ENCODE measurements at regions of chr6 and their contacts with region 1.

Region 1: GRCh38 chr6:43758617-43759050 is 11.4 kb upstream of the VEGFA start:
- DNase-seq: peak; percentile 90
- ATAC-seq: peak; percentile 97
- H3K4me3 Mint-ChIP-seq: no peak overlapping the region
- H3K27ac Mint-ChIP-seq: no peak overlapping the region
- H3K4me1 Mint-ChIP-seq: peaks cover 21% of the 10 kb centered on the region
- H3K27me3 Mint-ChIP-seq: no peaks in the 10 kb centered on the region; the same call in 1 of the 2 replicates
- CTCF ChIP-seq: peak; percentile 63

Region 2: GRCh38 chr6:43347021-43347420 is 411.6 kb before region 1 on chr6:
- CTCF ChIA-PET with region 1: no interaction called
- POLR2A ChIA-PET with region 1: no interaction called
- DNase-seq: no peak
- ATAC-seq: no peak
- H3K4me3 Mint-ChIP-seq: no peak overlapping the region
- H3K27ac Mint-ChIP-seq: no peak overlapping the region
- H3K4me1 Mint-ChIP-seq: no peaks in the 10 kb centered on the region
- H3K27me3 Mint-ChIP-seq: no peaks in the 10 kb centered on the region
- CTCF ChIP-seq: no peak

Region 3: GRCh38 chr6:43723737-43724295 is 34.8 kb before region 1 on chr6:
- CTCF ChIA-PET with region 1: interaction called, 16 read pairs
- POLR2A ChIA-PET with region 1: interaction called, 3 read pairs
- DNase-seq: peak; percentile 80
- ATAC-seq: peak; percentile 93
- H3K4me3 Mint-ChIP-seq: no peak overlapping the region
- H3K27ac Mint-ChIP-seq: no peak overlapping the region
- H3K4me1 Mint-ChIP-seq: peaks cover 12% of the 10 kb centered on the region
- H3K27me3 Mint-ChIP-seq: no peaks in the 10 kb centered on the region; the same call in 1 of the 2 replicates
- CTCF ChIP-seq: peak; percentile 60

Region 4: DNA sequence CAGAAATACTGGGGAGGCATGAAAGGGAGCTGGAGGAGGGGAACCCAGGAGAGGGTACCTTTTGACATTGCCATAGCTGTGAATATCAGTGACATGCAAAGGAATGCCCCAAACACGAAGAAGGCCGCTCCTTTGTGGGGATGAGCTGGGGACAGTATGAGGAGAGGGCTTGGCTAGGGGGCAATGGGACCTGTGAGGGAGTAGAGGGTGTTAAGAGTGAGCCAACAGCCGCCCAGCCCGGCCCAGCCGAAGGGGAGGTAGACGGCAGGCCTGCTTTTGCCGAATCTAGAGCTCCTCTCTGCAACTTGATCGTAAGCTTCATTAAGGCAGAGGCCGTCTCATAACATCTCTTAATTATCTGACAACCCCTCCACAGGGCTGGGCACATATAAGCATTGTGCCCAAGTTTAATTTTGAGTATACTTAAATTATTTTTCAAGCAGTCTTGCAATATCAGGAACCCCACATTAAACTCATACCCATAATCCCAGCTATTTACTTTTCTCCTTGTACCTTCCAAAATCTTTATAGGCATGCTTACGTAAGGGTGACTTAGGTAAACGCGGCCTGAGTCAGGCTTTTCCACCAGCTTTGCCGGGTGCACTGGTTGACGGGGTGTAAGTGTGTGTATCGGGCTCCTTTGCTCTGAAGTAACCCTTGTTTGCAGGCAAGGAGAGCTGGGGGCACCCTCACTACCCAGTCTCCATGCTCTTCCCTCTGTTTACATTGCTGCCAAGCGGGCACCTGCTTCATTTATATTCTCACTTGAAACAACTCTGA is 13.5 kb before region 1 on chr6:
- CTCF ChIA-PET with region 1: interaction called, 11 read pairs
- POLR2A ChIA-PET with region 1: no interaction called
- DNase-seq: no peak
- ATAC-seq: no peak
- H3K4me3 Mint-ChIP-seq: no peak overlapping the region
- H3K27ac Mint-ChIP-seq: no peak overlapping the region; the same call in 1 of the 2 replicates
- H3K4me1 Mint-ChIP-seq: peaks cover 28% of the 10 kb centered on the region
- H3K27me3 Mint-ChIP-seq: peaks cover 3% of the 10 kb centered on the region
- CTCF ChIP-seq: no peak

Region 5: GRCh38 chr6:43774776-43775534 is 16.3 kb after region 1 on chr6:
- CTCF ChIA-PET with region 1: interaction called, 67 read pairs
- POLR2A ChIA-PET with region 1: interaction called, 18 read pairs
- DNase-seq: peak; percentile 85
- ATAC-seq: peak; percentile 46
- H3K4me3 Mint-ChIP-seq: peak overlapping the region; percentile 48
- H3K27ac Mint-ChIP-seq: peak overlapping the region; percentile 82
- H3K4me1 Mint-ChIP-seq: peaks cover 33% of the 10 kb centered on the region
- H3K27me3 Mint-ChIP-seq: peaks cover 2% of the 10 kb centered on the region; the same call in 1 of the 2 replicates
- CTCF ChIP-seq: peak; percentile 82

Region 6: DNA sequence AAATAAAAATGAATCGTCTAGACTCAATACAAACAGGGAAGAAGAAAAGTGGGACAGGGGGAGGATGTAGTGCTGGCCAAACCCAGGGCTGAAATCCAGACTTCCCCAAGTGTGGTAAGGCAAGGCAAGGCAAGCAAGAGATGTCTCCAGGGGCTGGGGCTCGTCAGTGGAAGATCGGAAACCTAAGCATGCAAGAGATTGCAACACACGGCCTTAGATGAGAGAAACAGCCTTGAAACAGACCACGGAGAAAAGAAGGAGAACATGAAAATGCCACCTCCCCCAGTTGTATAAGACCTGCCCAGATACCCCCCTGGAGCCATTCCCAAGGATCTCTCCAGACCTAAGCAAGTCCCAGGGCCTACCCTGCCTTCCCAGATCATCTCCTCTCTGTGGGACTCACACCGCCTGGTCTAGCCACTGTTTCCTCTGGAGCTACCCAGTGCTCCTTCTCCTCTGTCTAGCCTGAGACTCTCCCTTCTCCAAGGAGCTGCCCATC is 31.4 kb after region 1 on chr6:
- CTCF ChIA-PET with region 1: no interaction called
- POLR2A ChIA-PET with region 1: no interaction called
- DNase-seq: no peak
- ATAC-seq: no peak
- H3K4me3 Mint-ChIP-seq: no peak overlapping the region
- H3K27ac Mint-ChIP-seq: no peak overlapping the region
- H3K4me1 Mint-ChIP-seq: no peaks in the 10 kb centered on the region
- H3K27me3 Mint-ChIP-seq: no peaks in the 10 kb centered on the region
- CTCF ChIP-seq: no peak

Measured in WTC11 (cell line).